ENCODE measurements at regions of chr15 and their contacts with region 1.

Region 1: GRCh38 chr15:85412956-85413854 is 32.8 kb downstream of the AKAP13 start:
- DNase-seq: peak; percentile 98
- H3K4me3 ChIP-seq: no peak overlapping the region
- H3K27ac ChIP-seq: peak overlapping the region; percentile 98
- H3K4me1 ChIP-seq: peaks cover 44% of the 10 kb centered on the region
- H3K27me3 ChIP-seq: no peaks in the 10 kb centered on the region
- CTCF ChIP-seq: peak in 1 of 2 donors; percentile 28

Region 2: DNA sequence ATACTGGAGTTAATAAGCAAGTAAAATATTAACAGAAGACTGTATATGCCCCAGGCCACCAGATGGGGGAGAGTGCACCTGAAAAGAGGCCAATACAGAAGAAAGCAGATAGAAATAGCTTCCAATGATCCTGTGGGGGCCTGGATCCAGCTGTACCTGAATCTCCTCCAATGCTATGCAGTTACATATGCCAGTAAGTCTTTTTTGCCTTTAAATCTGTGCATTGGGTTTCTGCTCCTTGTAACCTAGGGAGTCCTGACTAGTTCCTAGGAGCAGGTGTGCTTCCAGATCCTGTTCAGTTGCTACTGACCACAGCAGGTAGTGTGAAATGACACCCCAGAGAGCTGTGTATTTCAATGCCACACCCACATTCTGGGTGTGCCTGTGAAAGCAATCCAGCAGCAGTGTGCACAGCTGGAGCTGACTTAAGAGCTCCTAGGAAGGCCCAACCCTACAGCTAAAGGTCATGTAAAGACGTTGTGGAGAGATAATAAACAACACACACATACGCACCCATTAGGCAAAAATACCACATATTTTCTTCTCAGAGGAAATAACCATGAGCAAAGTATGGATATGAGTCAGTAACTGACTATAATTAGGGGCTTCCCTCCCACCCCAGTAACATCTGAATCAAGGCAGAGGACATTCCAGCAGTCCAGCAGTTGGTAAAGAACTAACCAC is 95.0 kb before region 1 on chr15:
- CTCF ChIA-PET with region 1: interaction called, 4 read pairs
- dilution Hi-C with region 1: loop called (anchors 5 kb)
- in situ Hi-C with region 1: no loop called
- intact Hi-C with region 1: no loop called
- DNase-seq: peak; percentile 90
- H3K4me3 ChIP-seq: no peak overlapping the region
- H3K27ac ChIP-seq: peak overlapping the region; percentile 43
- H3K4me1 ChIP-seq: peaks cover 16% of the 10 kb centered on the region
- H3K27me3 ChIP-seq: no peaks in the 10 kb centered on the region
- CTCF ChIP-seq: peak in 1 of 2 donors; percentile 22

Region 3: DNA sequence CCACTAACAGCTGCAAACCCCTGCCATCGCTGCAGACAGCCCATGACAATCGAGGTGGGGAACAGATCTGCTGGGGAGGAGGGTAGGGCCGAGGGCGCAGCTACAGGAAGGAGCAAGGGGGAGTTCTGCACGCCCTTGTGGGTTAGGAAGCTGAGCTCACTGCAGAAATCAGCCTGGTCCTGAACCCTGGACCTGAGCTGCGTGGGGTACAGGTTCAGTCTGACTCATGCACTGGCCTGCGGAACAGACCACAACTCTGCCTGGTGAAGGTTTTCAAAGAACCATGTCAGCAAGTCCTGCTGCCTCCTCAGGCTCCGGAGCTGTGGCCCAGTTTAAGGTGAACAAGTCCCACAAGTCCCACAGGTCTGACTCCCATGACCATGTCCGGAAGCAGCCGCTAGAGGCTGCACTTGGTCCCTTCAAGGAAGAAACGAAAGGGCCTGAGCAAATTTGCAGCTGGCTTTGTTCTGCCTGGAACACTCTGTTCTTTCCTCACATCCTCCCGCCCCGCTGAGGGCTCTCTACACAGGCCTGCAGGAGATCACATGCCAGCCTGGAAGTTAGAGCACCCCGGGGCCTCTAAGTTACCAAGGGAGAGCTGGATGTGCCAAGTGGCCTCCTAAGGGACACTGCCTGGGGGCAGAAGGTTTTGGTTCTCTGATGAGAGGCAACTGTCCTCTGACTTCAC is 82.2 kb before region 1 on chr15:
- CTCF ChIA-PET with region 1: interaction called, 35 read pairs
- dilution Hi-C with region 1: no loop called
- in situ Hi-C with region 1: loop called (anchors 5 to 10 kb)
- intact Hi-C with region 1: loop called (anchors 1 kb)
- DNase-seq: peak; percentile 93
- H3K4me3 ChIP-seq: no peak overlapping the region
- H3K27ac ChIP-seq: peak overlapping the region; percentile 61
- H3K4me1 ChIP-seq: peaks cover 20% of the 10 kb centered on the region
- H3K27me3 ChIP-seq: no peaks in the 10 kb centered on the region
- CTCF ChIP-seq: peak; percentile 96 to 100

Region 4: DNA sequence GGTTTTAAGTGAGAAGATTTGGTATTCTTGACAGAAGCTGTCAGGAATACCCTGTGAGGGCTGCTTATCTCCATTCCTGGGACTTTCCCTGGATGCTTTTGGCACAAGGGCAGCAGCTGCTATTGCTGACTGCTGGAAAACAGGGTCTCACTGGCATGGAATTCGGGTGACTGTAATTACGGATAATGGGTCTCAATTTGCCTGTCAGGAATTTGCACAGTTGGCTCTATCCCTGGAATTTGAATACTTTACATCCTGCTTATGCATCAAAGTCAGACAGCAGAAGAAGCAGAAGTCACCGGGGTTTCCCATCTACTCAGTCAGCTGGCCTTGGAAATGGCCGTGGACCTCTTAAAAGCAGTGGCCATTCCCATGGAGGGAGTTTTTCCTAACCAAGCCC is 58.7 kb before region 1 on chr15:
- CTCF ChIA-PET with region 1: no interaction called
- dilution Hi-C with region 1: no loop called
- in situ Hi-C with region 1: no loop called
- intact Hi-C with region 1: no loop called
- DNase-seq: no peak
- H3K4me3 ChIP-seq: no peak overlapping the region
- H3K27ac ChIP-seq: no peak overlapping the region
- H3K4me1 ChIP-seq: peaks cover 27% of the 10 kb centered on the region
- H3K27me3 ChIP-seq: no peaks in the 10 kb centered on the region
- CTCF ChIP-seq: no peak

Region 5: DNA sequence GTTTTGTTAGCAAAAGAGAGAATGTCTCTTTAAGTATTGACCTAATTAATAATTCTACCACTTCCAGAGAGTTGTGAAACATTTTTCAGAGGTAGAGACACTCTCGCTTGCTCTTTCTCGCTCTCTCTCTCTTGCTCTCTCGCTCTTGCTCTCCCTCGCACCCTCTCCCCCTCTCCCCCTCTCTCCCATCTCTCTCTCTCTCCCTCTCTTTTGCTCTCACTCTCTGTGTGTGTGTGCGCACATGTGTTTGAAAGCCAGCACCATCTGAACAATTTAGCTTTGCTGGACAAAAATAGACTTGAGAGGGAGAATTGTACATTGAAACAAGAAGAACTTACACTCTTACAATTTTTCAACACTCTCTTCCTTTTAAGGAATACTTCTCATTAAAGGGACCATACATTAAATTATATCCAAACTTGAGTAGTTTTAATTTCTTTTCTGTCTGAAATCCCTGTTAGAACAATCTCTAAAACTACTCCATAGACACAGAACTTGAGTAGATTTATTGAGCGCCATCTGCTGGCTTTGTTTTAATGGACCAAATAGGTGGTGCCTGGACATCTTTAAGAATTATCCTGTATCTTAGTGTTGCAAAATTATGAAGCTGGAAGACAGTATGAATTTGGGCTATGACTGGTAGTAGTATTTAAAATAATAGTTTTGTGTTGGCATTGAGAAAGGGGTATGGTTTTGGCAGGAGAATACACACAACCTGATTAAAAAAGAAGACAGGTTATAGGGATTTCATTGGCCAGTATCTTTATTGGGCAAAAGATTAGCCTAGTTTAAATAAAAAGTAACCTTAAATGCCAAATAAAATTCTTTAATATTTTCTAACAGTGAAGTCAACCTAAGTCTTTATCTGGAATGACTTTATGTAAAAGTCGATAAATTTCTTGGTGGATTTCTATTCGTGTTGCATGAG is 91.8 kb after region 1 on chr15:
- CTCF ChIA-PET with region 1: interaction called, 13 read pairs
- dilution Hi-C with region 1: no loop called
- in situ Hi-C with region 1: no loop called
- intact Hi-C with region 1: loop called (anchors 1 kb)
- DNase-seq: peak; percentile 52
- H3K4me3 ChIP-seq: no peak overlapping the region
- H3K27ac ChIP-seq: no peak overlapping the region
- H3K4me1 ChIP-seq: no peaks in the 10 kb centered on the region
- H3K27me3 ChIP-seq: no peaks in the 10 kb centered on the region
- CTCF ChIP-seq: peak; percentile 52 to 59